Left ventricle myocardium superior (tissue), 1 donor: ENCODE measurements at regions of chr2 and their contacts with region 1.

Region 1: GRCh38 chr2:3651691-3652648 is 6.0 kb upstream of the ALLC start:
- DNase-seq: peak; percentile 57
- ATAC-seq: peak; percentile 56

Region 2: DNA sequence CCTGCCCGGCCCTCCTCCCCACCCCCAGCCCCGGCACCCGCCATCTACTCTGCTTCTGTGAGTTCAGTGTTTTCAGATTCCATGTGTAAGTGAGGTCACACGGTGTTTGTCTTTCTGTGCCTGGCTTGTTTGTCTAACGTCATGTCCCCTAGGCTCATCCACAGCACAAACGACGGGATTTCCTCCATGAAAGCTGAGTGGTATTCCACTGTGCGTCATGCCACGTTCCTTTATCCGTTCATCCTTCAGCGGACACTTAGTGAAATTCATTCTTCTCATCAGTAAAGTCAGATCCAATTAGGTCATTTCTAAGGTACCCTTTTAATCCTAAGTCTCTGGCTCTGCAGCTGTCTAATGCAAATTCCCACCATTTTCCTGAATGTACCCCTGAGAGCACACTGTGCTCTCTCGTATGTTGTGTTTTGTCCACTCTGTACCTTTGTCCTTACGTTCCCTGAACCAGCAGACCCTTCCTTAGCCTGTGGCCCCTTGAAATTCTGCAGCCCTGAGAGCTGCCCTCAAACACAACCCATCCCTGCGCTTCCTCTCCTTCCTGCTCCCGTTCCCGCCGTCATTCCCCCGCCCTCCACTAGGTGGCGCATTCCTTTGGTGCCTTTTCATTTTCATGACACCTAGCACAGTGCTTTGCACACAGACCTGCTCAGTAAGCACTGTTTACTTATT is 228.3 kb before region 1 on chr2:
- intact Hi-C with region 1: loop called (anchors 10 kb)
- DNase-seq: peak; percentile 83
- ATAC-seq: peak; percentile 52

Region 3: GRCh38 chr2:3793249-3793648 is 141.3 kb after region 1 on chr2:
- intact Hi-C with region 1: no loop called
- DNase-seq: peak; percentile 35
- ATAC-seq: peak; percentile 47

Region 4: DNA sequence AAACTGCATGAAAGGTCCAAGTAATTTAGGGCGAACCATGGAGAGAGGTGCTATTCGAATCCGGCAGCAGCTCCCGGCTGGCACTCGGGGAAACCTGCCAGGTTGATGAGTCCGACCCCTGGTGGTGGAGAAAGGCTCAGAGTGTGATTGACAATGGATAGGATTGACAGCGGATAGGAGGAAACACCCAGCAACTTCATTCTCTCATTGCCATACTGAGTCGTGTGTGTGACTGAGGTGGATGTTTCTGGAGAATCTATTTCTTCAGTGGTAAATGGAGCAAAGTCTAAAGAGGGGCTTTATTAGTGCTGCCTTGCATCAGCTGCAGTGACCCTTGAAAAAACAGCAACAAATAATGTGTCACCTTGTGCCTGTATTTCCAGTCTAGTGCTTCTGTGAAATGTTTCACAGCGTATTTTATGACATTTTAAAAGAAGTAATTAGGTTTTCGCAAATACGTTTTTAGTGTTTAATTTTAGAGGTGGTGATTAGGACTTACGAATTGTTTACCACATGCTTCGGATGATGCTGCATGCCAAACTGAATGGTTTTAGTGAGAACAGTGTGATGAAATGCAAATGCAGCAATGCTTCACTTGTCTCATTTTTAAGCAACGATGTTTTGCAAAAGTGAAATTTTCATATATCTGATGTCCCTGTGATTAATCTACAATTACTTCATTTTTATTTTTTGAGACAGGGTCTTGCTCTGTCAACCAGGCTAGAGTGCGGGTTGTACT is 153.4 kb after region 1 on chr2:
- intact Hi-C with region 1: no loop called
- DNase-seq: no peak
- ATAC-seq: no peak